ENCODE measurements at regions of chr6 and their contacts with region 1.

Region 1: GRCh38 chr6:168417191-168417590 is 23.8 kb upstream of the SMOC2 start:
- DNase-seq: peak in 1 of 2 experiments; percentile 59
- H3K4me3 ChIP-seq: no peak overlapping the region
- H3K27ac ChIP-seq: no peak overlapping the region
- H3K4me1 ChIP-seq: peaks cover 0 to 6% (median 1%) of the 10 kb centered on the region in 4 experiments; a peak in 4 of 7 replicates
- H3K27me3 ChIP-seq: no peaks in the 10 kb centered on the region; a peak in 1 of 7 replicates
- CTCF ChIP-seq: peak in 2 of 3 experiments; percentile 16 to 18; a peak in 2 of 4 replicates
- EP300 ChIP-seq: no peak
- POLR2A ChIP-seq: no peak
- RAD21 ChIP-seq: peak; percentile 31 to 45; a peak in 3 of 4 replicates

Region 2: DNA sequence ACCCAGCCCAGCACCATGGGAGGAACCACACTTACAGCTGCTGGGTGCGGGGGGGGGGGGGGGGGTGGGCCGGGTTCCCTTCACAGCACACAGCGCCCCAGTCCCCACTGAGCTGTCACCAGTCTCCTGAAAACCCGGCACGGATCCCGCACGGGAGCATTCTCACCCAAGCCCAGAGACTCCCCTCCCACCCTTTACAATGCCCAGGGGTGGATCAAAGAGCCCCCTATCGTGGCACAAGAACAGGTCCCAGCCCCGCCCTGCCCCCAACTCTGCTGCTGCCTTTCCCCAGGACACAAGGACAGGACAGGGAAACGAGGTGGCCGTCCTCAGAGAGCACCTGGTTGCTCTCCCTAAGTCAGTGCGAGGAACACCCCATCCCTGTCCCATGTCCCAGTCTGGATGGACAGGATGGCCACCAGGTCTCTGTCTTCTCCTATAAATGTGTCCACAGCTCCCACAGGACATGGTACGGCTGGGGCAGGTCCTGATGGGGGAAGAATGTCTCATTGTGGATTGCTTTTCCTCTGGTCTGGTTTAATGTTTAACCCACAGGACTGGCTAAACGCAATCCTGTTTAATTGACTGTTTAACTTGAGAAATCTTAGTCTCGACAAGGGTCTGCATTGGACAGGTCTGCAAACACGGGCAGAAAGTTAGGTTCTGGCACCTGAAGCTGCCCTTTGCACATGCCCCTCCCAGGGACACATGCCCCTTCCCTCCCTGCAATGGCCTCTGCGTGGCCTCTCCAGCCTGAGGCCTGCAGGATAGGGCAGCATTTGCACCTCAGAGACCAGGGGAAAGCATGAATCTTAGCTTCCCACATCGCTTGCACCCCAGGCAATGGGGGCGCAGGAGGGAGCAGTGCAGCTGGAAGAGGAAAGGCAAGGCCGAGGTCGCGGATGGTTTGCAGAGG is 142.9 kb before region 1 on chr6:
- CTCF ChIA-PET with region 1: no interaction called
- POLR2A ChIA-PET with region 1: no interaction called
- DNase-seq: no peak
- H3K4me3 ChIP-seq: no peak overlapping the region
- H3K27ac ChIP-seq: no peak overlapping the region
- H3K4me1 ChIP-seq: peaks cover 0 to 17% (median 7%) of the 10 kb centered on the region in 4 experiments; a peak in 6 of 7 replicates
- H3K27me3 ChIP-seq: no peaks in the 10 kb centered on the region; a peak in 1 of 7 replicates
- CTCF ChIP-seq: no peak
- EP300 ChIP-seq: no peak
- POLR2A ChIP-seq: no peak
- RAD21 ChIP-seq: no peak

Region 3: GRCh38 chr6:168432081-168432595 is 14.9 kb after region 1 on chr6:
- CTCF ChIA-PET with region 1: interaction called, 10 read pairs
- POLR2A ChIA-PET with region 1: interaction called, 4 read pairs
- DNase-seq: no peak
- H3K4me3 ChIP-seq: no peak overlapping the region
- H3K27ac ChIP-seq: no peak overlapping the region
- H3K4me1 ChIP-seq: peaks cover 0 to 12% (median 5%) of the 10 kb centered on the region in 4 experiments; a peak in 5 of 7 replicates
- H3K27me3 ChIP-seq: no peaks in the 10 kb centered on the region; a peak in 2 of 7 replicates
- CTCF ChIP-seq: no peak
- EP300 ChIP-seq: no peak
- POLR2A ChIP-seq: no peak
- RAD21 ChIP-seq: no peak

Measured in H1 (cell line).